ENCODE measurements at regions of chr1 and their contacts with region 1.

Region 1: GRCh38 chr1:30718636-30719405 is 4.6 kb downstream of the MATN1 start:
- DNase-seq: peak; percentile 77 to 97 (median 84)
- ATAC-seq: peak; percentile 11
- H3K4me3 ChIP-seq: peak overlapping the region; percentile 84 to 98
- H3K4me3 Mint-ChIP-seq: peak overlapping the region; percentile 87
- H3K27ac ChIP-seq: peak overlapping the region; percentile 99
- H3K27ac Mint-ChIP-seq: peak overlapping the region; percentile 94
- H3K4me1 ChIP-seq: peaks cover 34% of the 10 kb centered on the region
- H3K4me1 Mint-ChIP-seq: peaks cover 42% of the 10 kb centered on the region
- H3K27me3 ChIP-seq: no peaks in the 10 kb centered on the region
- H3K27me3 Mint-ChIP-seq: no peaks in the 10 kb centered on the region
- CTCF ChIP-seq: no peak

Region 2: DNA sequence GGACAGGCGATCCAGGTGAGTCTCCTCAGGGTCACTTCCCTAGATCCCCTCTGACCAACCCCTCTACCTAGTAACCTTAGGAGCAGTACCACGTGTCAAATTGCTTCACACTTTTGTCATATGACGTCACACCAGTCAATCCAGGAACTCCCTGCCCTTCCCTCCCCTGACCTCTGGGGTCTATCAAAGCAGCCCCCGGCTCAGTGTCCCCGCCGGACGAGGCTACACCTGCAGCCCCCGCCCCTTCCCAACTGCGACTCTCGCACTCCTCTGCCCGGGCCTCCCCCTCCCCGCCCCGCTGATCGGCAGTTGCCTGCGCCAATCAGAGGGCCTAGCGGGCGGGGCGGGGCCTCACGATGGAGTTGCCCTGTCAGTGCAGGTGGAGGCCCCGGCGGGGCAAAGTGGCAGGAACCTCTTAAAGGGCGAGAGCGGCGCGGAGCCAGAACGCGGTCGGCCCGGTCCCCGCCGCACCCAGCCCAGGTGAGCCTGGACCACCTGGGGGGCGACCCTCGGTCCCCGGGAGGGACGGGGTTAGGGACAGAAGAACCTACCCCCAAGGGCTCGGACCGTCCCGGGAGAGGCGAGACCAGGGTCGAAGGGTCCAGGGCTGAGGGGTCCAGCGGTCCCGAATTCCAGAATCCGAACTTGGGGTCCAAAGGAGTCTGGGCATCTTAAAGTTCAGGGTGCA is 1831.9 kb before region 1 on chr1:
- CTCF ChIA-PET with region 1: no interaction called
- POLR2A ChIA-PET with region 1: no interaction called
- intact Hi-C with region 1: loop called in 1 of 2 experiments (anchors 5 kb)
- DNase-seq: peak; percentile 80 to 94 (median 87)
- ATAC-seq: peak; percentile 71
- H3K4me3 ChIP-seq: peak overlapping the region; percentile 93 to 94
- H3K4me3 Mint-ChIP-seq: peak overlapping the region; percentile 87
- H3K27ac ChIP-seq: peak overlapping the region; percentile 67 to 88
- H3K27ac Mint-ChIP-seq: peak overlapping the region; percentile 96
- H3K4me1 ChIP-seq: peaks cover 41% of the 10 kb centered on the region
- H3K4me1 Mint-ChIP-seq: peaks cover 59% of the 10 kb centered on the region
- H3K27me3 ChIP-seq: no peaks in the 10 kb centered on the region
- H3K27me3 Mint-ChIP-seq: no peaks in the 10 kb centered on the region
- CTCF ChIP-seq: no peak

Region 3: GRCh38 chr1:30618335-30618747 is 100.5 kb before region 1 on chr1:
- CTCF ChIA-PET with region 1: no interaction called
- POLR2A ChIA-PET with region 1: no interaction called
- intact Hi-C with region 1: no loop called
- DNase-seq: no peak
- ATAC-seq: no peak
- H3K4me3 ChIP-seq: no peak overlapping the region
- H3K4me3 Mint-ChIP-seq: no peak overlapping the region
- H3K27ac ChIP-seq: no peak overlapping the region
- H3K27ac Mint-ChIP-seq: no peak overlapping the region
- H3K4me1 ChIP-seq: no peaks in the 10 kb centered on the region
- H3K4me1 Mint-ChIP-seq: no peaks in the 10 kb centered on the region
- H3K27me3 ChIP-seq: no peaks in the 10 kb centered on the region
- H3K27me3 Mint-ChIP-seq: peaks cover 26% of the 10 kb centered on the region
- CTCF ChIP-seq: no peak

Region 4: DNA sequence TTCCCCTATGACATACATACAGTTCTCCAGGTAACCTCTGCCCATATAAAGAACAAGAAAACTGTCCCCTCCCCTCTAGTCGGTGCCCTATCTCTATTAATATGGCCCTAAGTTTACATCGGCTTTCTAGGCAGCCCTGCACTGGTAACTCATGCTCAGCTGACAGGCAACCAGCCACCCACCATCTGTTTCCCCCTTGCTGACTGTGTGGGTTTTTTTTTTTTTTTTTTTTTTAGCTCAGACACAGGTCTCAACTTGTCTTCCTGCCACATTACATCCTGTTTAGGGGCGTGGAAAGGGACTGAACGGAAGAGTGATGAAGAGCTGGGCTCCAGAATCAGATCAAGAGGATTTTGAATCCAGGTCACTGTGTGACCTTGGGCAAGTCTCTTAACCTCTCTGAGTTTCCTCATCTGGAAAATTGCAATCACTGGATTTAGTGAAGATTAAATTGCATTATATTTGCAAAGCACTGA is 24.8 kb after region 1 on chr1:
- CTCF ChIA-PET with region 1: interaction called, 64 read pairs
- POLR2A ChIA-PET with region 1: interaction called, 24 read pairs
- intact Hi-C with region 1: loop called (anchors 1 kb)
- DNase-seq: peak; percentile 43 to 94 (median 75)
- ATAC-seq: peak; percentile 82
- H3K4me3 ChIP-seq: peak overlapping the region; percentile 25 to 27
- H3K4me3 Mint-ChIP-seq: peak overlapping the region; percentile 77
- H3K27ac ChIP-seq: peak overlapping the region; percentile 72 to 92
- H3K27ac Mint-ChIP-seq: peak overlapping the region; percentile 99
- H3K4me1 ChIP-seq: peaks cover 90% of the 10 kb centered on the region
- H3K4me1 Mint-ChIP-seq: peaks cover 94% of the 10 kb centered on the region
- H3K27me3 ChIP-seq: no peaks in the 10 kb centered on the region
- H3K27me3 Mint-ChIP-seq: no peaks in the 10 kb centered on the region
- CTCF ChIP-seq: no peak

Region 5: GRCh38 chr1:30764939-30765555 is 46.2 kb after region 1 on chr1:
- CTCF ChIA-PET with region 1: interaction called, 86 read pairs
- POLR2A ChIA-PET with region 1: interaction called, 101 read pairs
- intact Hi-C with region 1: no loop called
- DNase-seq: no peak
- ATAC-seq: no peak
- H3K4me3 ChIP-seq: no peak overlapping the region
- H3K4me3 Mint-ChIP-seq: no peak overlapping the region
- H3K27ac ChIP-seq: no peak overlapping the region
- H3K27ac Mint-ChIP-seq: peak overlapping the region; percentile 81
- H3K4me1 ChIP-seq: peaks cover 48% of the 10 kb centered on the region
- H3K4me1 Mint-ChIP-seq: peaks cover 66% of the 10 kb centered on the region
- H3K27me3 ChIP-seq: no peaks in the 10 kb centered on the region
- H3K27me3 Mint-ChIP-seq: no peaks in the 10 kb centered on the region
- CTCF ChIP-seq: no peak

Region 6: DNA sequence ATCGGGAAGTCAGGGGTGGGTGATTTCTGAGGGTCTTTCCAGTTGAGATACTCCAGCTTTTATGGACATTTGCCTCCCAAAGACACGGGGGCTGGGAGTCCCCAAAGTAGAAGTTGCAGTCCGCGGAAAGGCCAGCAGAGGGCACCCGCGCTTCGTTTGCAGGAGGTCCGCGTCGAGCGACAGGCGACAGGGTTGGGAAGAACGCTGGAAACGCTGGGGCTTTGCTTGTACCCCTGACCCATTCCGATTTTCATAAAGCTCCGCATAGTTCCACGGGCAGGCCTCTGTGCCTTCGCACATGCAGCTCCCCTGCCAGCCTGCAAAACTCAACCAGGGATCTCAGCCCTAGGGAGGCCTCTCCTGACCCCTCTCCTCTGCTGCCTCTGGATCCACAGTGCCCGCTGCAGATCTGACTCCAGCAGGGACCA is 83.0 kb after region 1 on chr1:
- CTCF ChIA-PET with region 1: interaction called, 54 read pairs
- POLR2A ChIA-PET with region 1: no interaction called
- intact Hi-C with region 1: no loop called
- DNase-seq: peak; percentile 65 to 88 (median 80)
- ATAC-seq: peak; percentile 87
- H3K4me3 ChIP-seq: no peak overlapping the region
- H3K4me3 Mint-ChIP-seq: no peak overlapping the region
- H3K27ac ChIP-seq: no peak overlapping the region
- H3K27ac Mint-ChIP-seq: no peak overlapping the region
- H3K4me1 ChIP-seq: no peaks in the 10 kb centered on the region
- H3K4me1 Mint-ChIP-seq: peaks cover 6% of the 10 kb centered on the region
- H3K27me3 ChIP-seq: peaks cover 0 to 3% of the 10 kb centered on the region in 2 experiments
- H3K27me3 Mint-ChIP-seq: peaks cover 31% of the 10 kb centered on the region
- CTCF ChIP-seq: peak; percentile 90

Region 7: GRCh38 chr1:31065310-31066217 is 346.7 kb after region 1 on chr1 and contains the start of gene PUM1:
- CTCF ChIA-PET with region 1: no interaction called
- POLR2A ChIA-PET with region 1: no interaction called
- intact Hi-C with region 1: loop called (anchors 1 to 5 kb)
- DNase-seq: peak; percentile 97 to 99 (median 98)
- ATAC-seq: peak; percentile 97
- H3K4me3 ChIP-seq: peak within 1 kb of the TSS; percentile 79
- H3K4me3 Mint-ChIP-seq: peak within 1 kb of the TSS; percentile 97
- H3K27ac ChIP-seq: peak within 1 kb of the TSS; percentile 83 to 94
- H3K27ac Mint-ChIP-seq: peak within 1 kb of the TSS; percentile 99
- H3K4me1 ChIP-seq: peaks cover 28% of the 10 kb centered on the region
- H3K4me1 Mint-ChIP-seq: peaks cover 27% of the 10 kb centered on the region
- H3K27me3 ChIP-seq: no peaks in the 10 kb centered on the region
- H3K27me3 Mint-ChIP-seq: no peaks in the 10 kb centered on the region
- CTCF ChIP-seq: no peak
- total RNA-seq, gene PUM1: 190 to 191 TPM

Region 8: DNA sequence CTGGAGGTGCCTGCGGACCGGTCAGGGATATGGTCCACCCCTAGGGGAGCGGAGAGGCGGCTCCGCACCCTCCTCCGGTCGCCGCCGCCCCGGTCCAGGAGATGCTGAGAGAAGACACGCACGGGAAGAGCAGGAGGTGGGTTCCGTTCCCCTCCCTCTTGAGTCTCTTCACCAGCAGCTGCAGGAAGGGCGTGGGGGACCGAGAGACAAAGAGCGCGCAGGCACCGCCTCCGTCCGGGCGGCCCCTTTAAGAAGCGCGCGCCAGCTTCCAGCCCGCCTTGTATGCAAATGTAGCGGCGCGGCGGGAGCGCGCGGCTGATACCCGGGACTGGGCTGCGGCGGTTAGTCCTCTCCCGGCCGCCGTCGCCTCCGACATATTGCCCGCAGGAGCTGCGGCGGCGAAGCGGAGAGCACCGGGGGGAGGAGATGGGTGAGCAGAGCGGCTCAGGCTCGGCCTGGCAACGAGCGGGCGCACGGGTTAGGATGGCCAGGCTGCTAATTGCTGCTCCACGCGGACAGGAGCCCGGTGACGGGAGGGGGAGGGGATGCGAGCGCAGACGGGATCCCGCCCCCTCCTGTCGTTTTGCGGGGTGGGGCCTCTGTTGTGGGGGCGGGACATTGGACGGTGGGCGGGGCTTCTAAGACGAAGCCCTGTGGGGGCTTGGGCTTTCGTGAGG is 1353.9 kb after region 1 on chr1 and contains the start of gene TMEM39B:
- CTCF ChIA-PET with region 1: no interaction called
- POLR2A ChIA-PET with region 1: no interaction called
- intact Hi-C with region 1: loop called in 1 of 2 experiments (anchors 10 kb)
- DNase-seq: peak; percentile 85 to 97 (median 92)
- ATAC-seq: peak; percentile 86
- H3K4me3 ChIP-seq: peak within 1 kb of the TSS; percentile 75 to 99
- H3K4me3 Mint-ChIP-seq: peak within 1 kb of the TSS; percentile 82
- H3K27ac ChIP-seq: peak within 1 kb of the TSS; percentile 65 to 74
- H3K27ac Mint-ChIP-seq: peak within 1 kb of the TSS; percentile 86
- H3K4me1 ChIP-seq: peaks cover 18% of the 10 kb centered on the region
- H3K4me1 Mint-ChIP-seq: peaks cover 32% of the 10 kb centered on the region
- H3K27me3 ChIP-seq: no peaks in the 10 kb centered on the region
- H3K27me3 Mint-ChIP-seq: no peaks in the 10 kb centered on the region
- CTCF ChIP-seq: no peak
- total RNA-seq, gene TMEM39B: 6.6 to 7.6 TPM